ENCODE measurements at regions of chr9 and their contacts with region 1.

Region 1: GRCh38 chr9:7536310-7536939 is 263.2 kb downstream of the DMAC1 start:
- DNase-seq: peak; percentile 68
- ATAC-seq: peak; percentile 37
- H3K4me3 Mint-ChIP-seq: no peak overlapping the region
- H3K27ac Mint-ChIP-seq: no peak overlapping the region
- H3K4me1 Mint-ChIP-seq: peaks cover 25% of the 10 kb centered on the region
- H3K27me3 Mint-ChIP-seq: peaks cover 12% of the 10 kb centered on the region
- CTCF ChIP-seq: peak; percentile 81

Region 2: DNA sequence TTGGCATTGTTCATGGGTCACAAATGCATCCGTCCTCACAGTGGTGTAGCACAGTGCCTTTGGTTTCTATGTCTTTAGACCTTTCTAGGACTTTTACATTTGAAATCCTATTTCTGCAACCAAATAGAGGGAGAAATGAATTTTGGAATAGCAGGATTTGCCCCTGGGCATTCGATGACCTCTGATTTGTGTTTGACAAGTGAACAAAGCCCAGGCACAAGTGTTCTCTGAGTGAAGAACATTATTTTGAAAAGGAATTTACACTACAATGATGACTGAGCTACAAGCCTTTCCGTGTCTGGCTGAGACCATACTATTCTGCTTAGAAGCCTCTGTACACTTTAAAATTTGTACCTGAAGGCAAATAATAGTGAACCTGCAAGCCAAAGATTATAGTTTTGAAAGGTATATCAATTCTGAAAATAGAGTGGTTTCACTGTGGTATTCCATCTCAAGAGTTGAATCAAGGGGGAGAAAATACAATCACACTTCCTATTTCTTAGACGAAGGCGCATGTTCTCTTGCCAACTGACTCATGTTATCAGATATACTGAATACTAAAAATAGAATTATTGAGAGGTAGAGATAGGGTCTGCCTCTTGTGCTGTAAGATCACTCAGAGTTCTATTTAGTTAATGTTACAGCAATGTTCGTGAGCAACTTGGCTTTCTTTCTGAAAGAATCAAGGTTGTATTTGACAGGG is 481.1 kb before region 1 on chr9:
- CTCF ChIA-PET with region 1: interaction called, 6 read pairs
- POLR2A ChIA-PET with region 1: no interaction called
- intact Hi-C with region 1: loop called (anchors 10 kb)
- DNase-seq: no peak
- ATAC-seq: no peak
- H3K4me3 Mint-ChIP-seq: no peak overlapping the region
- H3K27ac Mint-ChIP-seq: no peak overlapping the region
- H3K4me1 Mint-ChIP-seq: peaks cover 8% of the 10 kb centered on the region
- H3K27me3 Mint-ChIP-seq: no peaks in the 10 kb centered on the region
- CTCF ChIP-seq: no peak

Region 3: DNA sequence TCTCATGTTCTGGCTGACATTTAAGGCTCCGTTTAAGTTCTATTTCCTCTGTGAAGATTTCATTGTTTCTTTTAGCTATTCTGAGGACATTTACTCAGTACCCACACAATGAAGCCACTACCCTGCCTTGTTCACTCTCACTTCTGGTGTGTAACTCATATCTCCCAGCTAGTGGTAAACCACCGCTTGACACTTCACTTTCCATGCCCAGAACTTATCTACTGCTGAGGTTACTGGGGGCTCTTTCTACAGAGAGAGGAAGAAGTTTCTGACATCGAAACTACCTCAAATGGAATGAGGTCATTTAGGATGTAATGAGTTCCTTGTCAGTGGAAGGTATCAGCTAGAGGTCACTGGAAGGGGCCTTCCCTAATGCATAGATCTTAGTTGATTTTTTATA is 238.3 kb before region 1 on chr9:
- CTCF ChIA-PET with region 1: no interaction called
- POLR2A ChIA-PET with region 1: no interaction called
- intact Hi-C with region 1: loop called (anchors 1 kb)
- DNase-seq: peak; percentile 86
- ATAC-seq: peak; percentile 90
- H3K4me3 Mint-ChIP-seq: peak overlapping the region; percentile 23
- H3K27ac Mint-ChIP-seq: peak overlapping the region; percentile 87
- H3K4me1 Mint-ChIP-seq: peaks cover 26% of the 10 kb centered on the region
- H3K27me3 Mint-ChIP-seq: peaks cover 24% of the 10 kb centered on the region
- CTCF ChIP-seq: no peak

Region 4: GRCh38 chr9:7405924-7406604 is 130.4 kb before region 1 on chr9:
- CTCF ChIA-PET with region 1: interaction called, 3 read pairs
- POLR2A ChIA-PET with region 1: no interaction called
- intact Hi-C with region 1: loop called (anchors 1 kb)
- DNase-seq: no peak
- ATAC-seq: peak; percentile 65
- H3K4me3 Mint-ChIP-seq: no peak overlapping the region
- H3K27ac Mint-ChIP-seq: no peak overlapping the region
- H3K4me1 Mint-ChIP-seq: peaks cover 15% of the 10 kb centered on the region
- H3K27me3 Mint-ChIP-seq: peaks cover 28% of the 10 kb centered on the region
- CTCF ChIP-seq: no peak